Right ventricle myocardium inferior (tissue), 1 donor: ENCODE measurements at regions of chr1 and their contacts with region 1.

Region 1: GRCh38 chr1:183281553-183282091 is 95.6 kb downstream of the LAMC2 start:
- DNase-seq: peak; percentile 93
- ATAC-seq: peak; percentile 89

Region 2: GRCh38 chr1:183318433-183318832 is 36.8 kb after region 1 on chr1:
- intact Hi-C with region 1: loop called (anchors 1 kb)
- DNase-seq: peak; percentile 88
- ATAC-seq: peak; percentile 97

Region 3: DNA sequence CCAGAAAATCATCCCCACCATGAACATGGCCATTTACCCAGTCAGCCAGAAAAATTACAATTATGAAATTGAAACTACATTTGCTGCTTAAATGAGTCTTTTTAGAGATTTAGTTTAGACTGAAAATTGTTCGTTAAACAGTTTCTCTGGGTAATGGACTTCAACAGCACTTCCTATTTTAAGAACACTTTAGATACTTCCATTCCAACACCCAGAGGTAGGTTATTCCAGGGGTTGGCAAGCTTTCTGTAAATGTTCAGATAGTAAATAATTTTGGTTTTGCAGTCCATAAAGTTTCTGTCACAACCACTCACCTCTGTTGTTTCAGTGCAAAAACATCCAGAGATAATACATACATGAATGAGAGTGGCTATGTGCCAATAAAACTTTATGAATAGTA is 126.3 kb after region 1 on chr1:
- intact Hi-C with region 1: loop called (anchors 5 kb)
- DNase-seq: no peak
- ATAC-seq: peak; percentile 37

Region 4: GRCh38 chr1:183471743-183472487 is 190.3 kb after region 1 on chr1:
- intact Hi-C with region 1: loop called (anchors 2 kb)
- DNase-seq: peak; percentile 98
- ATAC-seq: peak; percentile 89

Region 5: DNA sequence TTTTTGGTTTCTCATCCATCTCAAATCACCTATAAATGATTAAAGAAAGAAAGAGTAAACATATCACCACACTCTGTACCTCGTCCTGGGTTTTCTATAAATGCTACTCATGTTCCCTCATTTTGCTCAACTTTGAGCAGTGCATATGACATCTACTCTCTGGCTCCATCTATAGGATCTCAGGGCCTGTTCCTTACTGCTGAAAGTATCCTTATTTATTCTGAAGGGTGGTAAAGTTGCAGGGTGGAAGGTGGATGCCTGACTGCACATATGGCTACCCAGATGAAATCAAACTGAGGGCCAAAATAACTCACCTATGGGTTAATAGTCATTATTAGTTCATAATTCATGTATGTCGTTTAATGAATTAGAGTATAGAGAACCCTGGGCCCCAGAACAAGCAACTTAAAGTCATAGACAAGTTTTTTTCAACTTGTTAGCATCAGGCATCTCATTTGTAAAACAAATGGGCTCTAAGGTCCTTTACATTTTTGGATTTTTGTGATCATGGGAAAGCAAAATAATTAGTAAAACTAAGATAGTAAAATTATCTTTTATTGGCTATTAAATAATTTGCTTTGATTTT is 262.1 kb after region 1 on chr1:
- intact Hi-C with region 1: loop called (anchors 10 kb)
- DNase-seq: no peak
- ATAC-seq: peak; percentile 84

Region 6: DNA sequence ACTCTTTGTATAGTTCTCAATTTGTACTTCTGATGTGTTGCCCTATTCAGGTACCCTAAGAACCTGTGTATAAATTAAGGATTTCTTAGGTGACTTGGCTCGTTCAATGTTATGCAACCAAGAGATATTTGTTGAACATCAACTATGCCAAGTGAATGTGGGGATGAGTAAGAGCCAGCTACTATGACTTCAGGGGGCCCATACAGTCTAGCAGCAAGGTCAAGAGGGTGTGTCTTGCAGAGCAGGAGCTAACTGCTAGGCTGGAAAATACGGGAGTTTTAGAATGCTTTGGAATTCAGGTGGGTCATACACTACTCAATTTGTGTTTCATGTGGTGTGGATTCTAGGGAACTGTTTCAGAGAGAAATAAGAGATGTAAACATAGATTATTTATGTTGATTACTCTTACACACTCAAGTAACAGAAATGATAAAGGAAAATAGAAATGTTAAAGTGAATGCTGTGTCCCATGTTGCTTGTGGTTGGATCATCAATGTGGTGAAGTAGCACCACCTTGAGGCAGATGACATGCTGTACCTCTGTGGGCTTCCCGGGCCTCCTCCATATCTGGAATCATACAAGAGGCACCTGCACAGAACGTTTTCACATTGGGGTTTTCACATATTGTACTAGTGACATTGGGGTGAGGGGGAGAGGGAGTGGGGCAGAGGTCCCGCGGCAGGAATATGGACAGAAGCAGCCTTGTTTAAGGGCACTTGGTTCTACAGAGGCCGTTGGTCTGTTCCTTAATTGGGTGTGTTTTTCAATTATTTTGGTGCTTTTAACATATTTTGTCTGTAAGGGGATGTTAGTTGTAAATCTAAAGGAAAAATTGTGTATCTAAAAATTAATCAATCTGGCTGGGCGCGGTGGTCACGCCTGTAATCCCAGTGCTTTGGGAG is 341.5 kb after region 1 on chr1:
- intact Hi-C with region 1: loop called (anchors 5 kb)
- DNase-seq: peak; percentile 61
- ATAC-seq: peak; percentile 88